ENCODE measurements at regions of chr7 and their contacts with region 1.

Region 1: GRCh38 chr7:23357190-23358093 is 58.3 kb downstream of the MALSU1 start:
- DNase-seq: peak; percentile 92
- ATAC-seq: peak; percentile 93
- H3K4me3 ChIP-seq: no peak overlapping the region
- H3K27ac ChIP-seq: peak overlapping the region; percentile 85
- H3K4me1 ChIP-seq: peaks cover 67% of the 10 kb centered on the region
- H3K27me3 ChIP-seq: no peaks in the 10 kb centered on the region
- CTCF ChIP-seq: peak; percentile 66; the same call in 1 of the 2 replicates

Region 2: DNA sequence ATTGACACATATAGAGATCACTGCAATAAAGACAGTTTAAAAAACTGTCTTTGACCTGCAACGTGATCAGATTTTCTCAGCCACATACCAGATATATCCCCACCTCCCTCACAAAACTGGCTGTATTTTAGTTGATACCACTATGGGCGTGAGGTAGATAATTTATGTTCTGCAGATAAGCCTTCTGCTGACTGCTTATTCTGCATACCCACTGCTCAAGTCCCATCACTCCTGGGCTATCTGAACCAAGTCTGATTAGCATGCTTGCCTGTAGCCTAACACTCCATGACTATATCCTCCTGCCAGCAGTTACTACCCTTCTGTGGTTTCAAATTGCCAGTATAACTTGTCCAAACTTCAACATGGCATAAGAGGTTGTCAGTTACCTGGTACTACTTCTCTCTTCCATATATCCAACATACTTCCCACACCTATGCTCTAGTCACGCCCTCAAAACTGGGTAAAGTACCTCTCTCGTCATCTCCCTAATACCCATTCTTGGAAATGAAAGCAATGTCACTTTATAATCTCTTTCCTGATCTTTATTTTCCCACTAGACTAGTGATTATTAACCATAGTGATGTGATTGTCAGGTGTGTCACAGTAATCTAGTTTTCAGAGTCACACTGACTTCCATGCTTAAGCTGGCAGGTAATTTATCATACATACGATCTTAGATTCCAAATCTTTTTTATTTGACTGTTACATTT is 12.4 kb after region 1 on chr7:
- CTCF ChIA-PET with region 1: interaction called, 8 read pairs
- POLR2A ChIA-PET with region 1: interaction called, 16 read pairs
- in situ Hi-C with region 1: no loop called
- intact Hi-C with region 1: no loop called
- DNase-seq: no peak
- ATAC-seq: no peak
- H3K4me3 ChIP-seq: no peak overlapping the region
- H3K27ac ChIP-seq: no peak overlapping the region
- H3K4me1 ChIP-seq: no peaks in the 10 kb centered on the region
- H3K27me3 ChIP-seq: no peaks in the 10 kb centered on the region
- CTCF ChIP-seq: no peak

Region 3: DNA sequence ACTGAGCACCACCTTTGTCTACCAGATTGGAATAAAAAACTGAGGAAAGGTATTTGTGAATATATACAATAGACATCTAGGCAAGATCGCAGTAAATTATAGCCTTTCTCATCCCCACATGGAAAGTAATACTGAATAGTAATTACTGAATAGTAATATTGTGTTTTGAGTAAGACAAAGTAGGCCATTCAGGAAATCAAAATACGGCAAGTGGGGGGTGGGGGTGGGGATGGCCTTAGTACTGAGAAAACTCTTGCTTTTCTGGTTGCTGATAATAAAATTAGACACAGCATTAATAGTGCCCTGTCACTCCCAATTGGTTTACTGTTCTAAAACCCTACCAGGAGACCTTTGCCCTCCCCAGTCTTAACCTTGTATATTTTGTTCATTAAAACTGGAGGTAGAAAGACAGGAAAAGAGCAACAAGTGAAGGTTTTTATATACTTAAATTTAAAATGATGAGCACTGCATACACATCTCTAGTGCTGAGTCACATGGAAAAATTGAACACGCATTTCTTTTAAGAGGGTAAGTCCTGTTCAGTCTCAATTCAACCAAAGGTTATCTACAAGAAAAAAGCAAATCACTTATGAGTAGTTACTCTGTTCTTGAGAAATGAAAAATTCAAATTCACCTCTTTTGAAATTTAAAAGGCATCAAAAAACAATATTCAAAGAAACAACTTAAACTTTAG is 47.3 kb after region 1 on chr7:
- CTCF ChIA-PET with region 1: interaction called, 6 read pairs
- POLR2A ChIA-PET with region 1: no interaction called
- in situ Hi-C with region 1: no loop called
- intact Hi-C with region 1: loop called (anchors 5 kb)
- DNase-seq: no peak
- ATAC-seq: no peak
- H3K4me3 ChIP-seq: no peak overlapping the region
- H3K27ac ChIP-seq: no peak overlapping the region
- H3K4me1 ChIP-seq: no peaks in the 10 kb centered on the region
- H3K27me3 ChIP-seq: no peaks in the 10 kb centered on the region
- CTCF ChIP-seq: no peak

Region 4: DNA sequence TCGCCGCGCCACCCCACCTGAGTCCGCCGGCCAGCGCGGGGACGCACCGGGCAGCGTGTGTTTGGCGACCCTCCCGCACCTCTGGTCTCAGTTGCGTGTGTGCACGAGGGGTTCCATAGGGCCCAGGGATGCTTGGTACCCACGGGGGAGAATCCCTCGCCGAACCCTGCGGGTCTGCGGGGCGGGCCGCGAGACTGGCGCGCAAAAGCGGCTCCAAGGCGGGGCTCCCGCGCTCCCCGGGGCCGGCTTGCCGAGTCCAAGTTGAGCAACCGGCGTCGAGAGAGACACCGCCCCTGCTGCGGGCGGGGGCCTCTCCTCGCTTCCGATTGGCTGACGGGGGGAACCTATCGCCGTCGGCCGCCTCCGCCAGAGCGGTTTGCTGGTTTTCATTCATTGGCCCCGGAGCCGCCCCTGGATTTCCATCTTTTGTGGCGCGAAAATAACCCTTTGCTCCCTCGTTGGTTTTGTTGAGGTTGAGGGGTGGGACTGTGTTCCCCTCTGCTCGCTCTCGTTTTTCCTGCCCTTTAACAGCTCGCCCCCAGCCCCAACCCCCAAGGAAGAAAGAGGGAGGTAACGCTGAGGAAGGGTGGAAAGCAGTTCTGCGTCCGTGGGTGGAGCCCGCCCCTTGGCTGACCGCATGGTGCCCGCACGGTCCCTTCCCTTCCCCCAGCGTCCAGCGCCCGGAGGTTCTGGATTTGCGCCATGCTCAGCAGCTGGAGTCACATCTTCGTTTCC is 116.8 kb after region 1 on chr7:
- CTCF ChIA-PET with region 1: interaction called, 4 read pairs
- POLR2A ChIA-PET with region 1: interaction called, 8 read pairs
- in situ Hi-C with region 1: no loop called
- intact Hi-C with region 1: loop called (anchors 5 kb)
- DNase-seq: no peak
- ATAC-seq: peak; percentile 82
- H3K4me3 ChIP-seq: peak overlapping the region; percentile 88 to 98
- H3K27ac ChIP-seq: peak overlapping the region; percentile 100
- H3K4me1 ChIP-seq: peaks cover 25% of the 10 kb centered on the region
- H3K27me3 ChIP-seq: no peaks in the 10 kb centered on the region
- CTCF ChIP-seq: no peak

Region 5: GRCh38 chr7:23546897-23547572 is 189.6 kb after region 1 on chr7:
- CTCF ChIA-PET with region 1: interaction called, 5 read pairs
- POLR2A ChIA-PET with region 1: no interaction called
- in situ Hi-C with region 1: no loop called
- intact Hi-C with region 1: loop called (anchors 2 kb)
- DNase-seq: peak; percentile 84
- ATAC-seq: peak; percentile 91
- H3K4me3 ChIP-seq: no peak overlapping the region
- H3K27ac ChIP-seq: no peak overlapping the region
- H3K4me1 ChIP-seq: no peaks in the 10 kb centered on the region
- H3K27me3 ChIP-seq: no peaks in the 10 kb centered on the region
- CTCF ChIP-seq: peak; percentile 99

Measured in Panc1 (cell line).